ENCODE measurements at regions of chr3 and their contacts with region 1.

Region 1: DNA sequence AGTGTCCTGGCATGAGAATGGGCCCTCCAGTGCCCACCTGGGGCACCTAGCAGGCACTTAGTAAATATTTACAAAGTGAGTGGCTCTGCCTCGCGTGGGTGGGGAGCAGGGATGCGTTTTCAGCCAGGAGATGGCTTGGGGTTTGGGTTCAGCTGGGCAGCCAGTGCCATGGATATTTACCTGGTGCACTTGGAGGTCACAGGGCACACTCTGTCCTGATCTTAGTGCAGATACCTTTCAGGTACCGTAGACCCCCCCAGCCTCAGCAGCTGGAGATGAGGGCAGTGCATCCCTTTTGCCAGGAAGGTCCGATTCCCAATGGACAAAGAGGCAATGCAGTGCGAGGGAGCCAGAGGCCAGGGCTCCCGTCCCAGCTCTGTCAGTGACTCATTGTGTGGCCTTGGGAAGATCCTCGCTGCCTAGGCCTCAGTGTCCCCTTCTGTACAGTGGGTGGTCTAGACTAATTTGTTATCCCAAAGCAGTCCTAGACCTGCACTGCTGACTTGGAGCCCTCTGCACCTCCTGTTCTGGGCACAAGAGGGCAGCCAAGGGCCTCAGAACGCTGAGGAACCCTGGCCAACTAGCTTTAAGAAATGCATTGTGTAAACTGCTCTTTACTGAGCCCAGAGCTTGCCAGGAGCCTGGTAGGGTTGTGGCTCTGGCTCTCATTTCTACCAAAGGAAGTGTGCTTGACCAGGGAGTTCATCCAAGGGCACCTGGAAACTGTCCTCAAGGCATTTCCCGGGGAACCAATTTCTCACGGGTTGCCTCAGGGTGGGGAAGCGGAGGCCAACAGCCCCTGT is 16.0 kb downstream of the HDAC11 start:
- DNase-seq: peak; percentile 75
- ATAC-seq: peak; percentile 86
- H3K4me3 ChIP-seq: no peak overlapping the region
- H3K4me3 Mint-ChIP-seq: no peak overlapping the region
- H3K27ac ChIP-seq: no peak overlapping the region
- H3K27ac Mint-ChIP-seq: no peak overlapping the region
- H3K4me1 ChIP-seq: no peaks in the 10 kb centered on the region
- H3K4me1 Mint-ChIP-seq: no peaks in the 10 kb centered on the region
- H3K27me3 ChIP-seq: no peaks in the 10 kb centered on the region
- H3K27me3 Mint-ChIP-seq: peaks cover 3% of the 10 kb centered on the region
- CTCF ChIP-seq: peak; percentile 88

Region 2: GRCh38 chr3:13391308-13391707 is 104.8 kb before region 1 on chr3:
- CTCF ChIA-PET with region 1: no interaction called
- POLR2A ChIA-PET with region 1: no interaction called
- intact Hi-C with region 1: no loop called
- DNase-seq: peak; percentile 42
- ATAC-seq: no peak
- H3K4me3 ChIP-seq: no peak overlapping the region
- H3K4me3 Mint-ChIP-seq: no peak overlapping the region
- H3K27ac ChIP-seq: no peak overlapping the region
- H3K27ac Mint-ChIP-seq: no peak overlapping the region
- H3K4me1 ChIP-seq: no peaks in the 10 kb centered on the region
- H3K4me1 Mint-ChIP-seq: peaks cover under 1% of the 10 kb centered on the region
- H3K27me3 ChIP-seq: no peaks in the 10 kb centered on the region
- H3K27me3 Mint-ChIP-seq: no peaks in the 10 kb centered on the region
- CTCF ChIP-seq: peak; percentile 43

Region 3: DNA sequence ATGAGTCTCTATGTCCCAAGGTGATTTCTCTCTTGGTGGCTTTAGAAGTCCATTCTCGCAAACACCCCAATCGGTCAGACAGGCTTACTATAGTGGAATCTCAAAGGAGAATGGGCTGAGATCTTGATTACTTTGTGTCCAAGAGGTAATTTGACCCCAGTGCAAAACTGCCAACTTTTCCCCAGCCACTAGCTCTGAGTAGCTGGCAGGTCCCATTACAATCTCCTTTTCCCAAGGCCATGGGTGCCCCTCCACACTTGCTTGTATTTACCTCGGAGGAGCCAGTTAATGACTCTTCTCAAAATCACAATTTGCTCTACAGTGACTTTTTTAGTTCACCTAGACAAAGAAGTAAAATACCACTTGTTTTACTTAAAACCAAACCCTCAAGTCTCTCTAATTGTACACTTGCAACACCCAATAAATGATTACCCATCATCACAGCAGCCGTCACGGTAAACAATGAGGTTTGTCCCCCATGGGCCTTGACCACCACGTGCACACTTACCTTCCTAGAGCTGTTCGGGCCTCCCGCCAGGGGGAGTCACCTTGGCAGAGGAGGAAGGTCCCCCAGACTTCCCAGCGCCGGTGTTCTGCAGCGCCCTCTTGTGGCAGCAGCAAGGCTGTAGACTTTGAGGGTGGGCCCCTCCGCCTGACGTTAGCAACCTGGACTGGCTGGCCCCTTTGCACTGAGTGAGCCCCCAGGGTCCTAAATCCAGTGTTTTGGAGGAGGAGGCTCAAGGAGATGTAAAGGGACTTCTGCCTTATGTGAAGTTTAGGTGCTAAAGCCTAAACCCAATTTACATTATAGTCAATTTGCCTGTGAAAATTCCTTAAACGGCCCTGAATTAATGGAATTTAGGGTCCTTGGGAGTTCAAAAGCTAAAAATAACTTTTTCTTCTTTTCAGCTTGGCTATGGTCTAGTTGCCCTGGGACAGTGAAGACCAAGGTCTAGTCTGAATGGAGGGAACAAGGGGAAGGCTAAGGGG is 34.7 kb before region 1 on chr3:
- CTCF ChIA-PET with region 1: no interaction called
- POLR2A ChIA-PET with region 1: no interaction called
- intact Hi-C with region 1: no loop called
- DNase-seq: peak; percentile 78
- ATAC-seq: peak; percentile 85
- H3K4me3 ChIP-seq: no peak overlapping the region
- H3K4me3 Mint-ChIP-seq: no peak overlapping the region
- H3K27ac ChIP-seq: no peak overlapping the region
- H3K27ac Mint-ChIP-seq: peak overlapping the region; percentile 20
- H3K4me1 ChIP-seq: no peaks in the 10 kb centered on the region
- H3K4me1 Mint-ChIP-seq: peaks cover 3% of the 10 kb centered on the region
- H3K27me3 ChIP-seq: peaks cover 0 to 9% (median 2%) of the 10 kb centered on the region in 4 experiments
- H3K27me3 Mint-ChIP-seq: peaks cover 20% of the 10 kb centered on the region
- CTCF ChIP-seq: peak; percentile 81

Region 4: DNA sequence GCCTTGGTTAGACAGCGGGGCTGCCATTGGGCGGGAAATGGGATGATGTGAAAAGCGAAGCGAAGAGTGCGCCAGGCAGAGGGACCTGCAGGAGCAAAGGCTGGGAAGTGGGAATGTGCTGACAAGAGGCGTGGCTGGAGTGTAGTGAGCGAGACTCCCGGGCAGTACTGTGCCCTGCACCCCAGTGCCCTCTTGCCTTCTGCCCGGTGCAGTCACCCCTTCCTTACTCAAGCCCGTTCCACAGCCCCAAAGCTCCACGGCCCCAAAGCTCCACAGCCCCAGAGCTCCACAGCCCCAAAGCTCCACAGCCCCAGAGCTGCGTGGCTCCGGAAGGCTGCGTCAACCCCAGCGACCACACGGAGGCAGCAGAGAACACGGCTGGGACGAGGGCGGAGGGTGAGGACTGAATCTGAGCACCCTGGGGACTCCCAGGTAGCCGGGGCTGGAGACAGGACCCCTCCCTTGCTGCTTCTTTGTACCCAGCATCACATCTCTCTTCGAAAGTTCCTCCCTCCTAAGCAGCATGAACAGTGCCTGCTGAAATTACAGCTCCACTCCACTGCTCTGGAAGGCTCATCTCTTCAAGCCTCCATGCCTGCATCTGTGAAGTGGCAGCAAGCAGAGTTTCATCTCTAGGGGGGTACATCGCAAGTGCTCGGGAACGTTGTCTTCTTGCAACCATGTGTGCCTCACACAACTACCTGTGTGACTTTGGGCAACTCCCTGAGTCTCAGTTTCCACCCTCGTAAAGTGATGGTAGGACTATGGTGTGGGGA is 161.7 kb after region 1 on chr3:
- CTCF ChIA-PET with region 1: interaction called, 286 read pairs
- POLR2A ChIA-PET with region 1: no interaction called
- intact Hi-C with region 1: no loop called
- DNase-seq: peak; percentile 60
- ATAC-seq: peak; percentile 75
- H3K4me3 ChIP-seq: no peak overlapping the region
- H3K4me3 Mint-ChIP-seq: no peak overlapping the region
- H3K27ac ChIP-seq: no peak overlapping the region
- H3K27ac Mint-ChIP-seq: no peak overlapping the region
- H3K4me1 ChIP-seq: peaks cover 4 to 8% of the 10 kb centered on the region in 2 donors
- H3K4me1 Mint-ChIP-seq: peaks cover 7% of the 10 kb centered on the region
- H3K27me3 ChIP-seq: peaks cover 0 to 56% (median 14%) of the 10 kb centered on the region in 4 experiments
- H3K27me3 Mint-ChIP-seq: peaks cover 48% of the 10 kb centered on the region
- CTCF ChIP-seq: peak; percentile 76